MCF 10A (cell line): ENCODE measurements at regions of chr11 and their contacts with region 1.

Region 1: GRCh38 chr11:86456052-86456939 is 81.6 kb downstream of the CCDC81 start:
- DNase-seq: peak; percentile 86
- H3K4me3 Mint-ChIP-seq: no peak overlapping the region
- H3K27ac Mint-ChIP-seq: no peak overlapping the region
- H3K4me1 Mint-ChIP-seq: peaks cover 26% of the 10 kb centered on the region
- H3K27me3 Mint-ChIP-seq: no peaks in the 10 kb centered on the region
- CTCF ChIP-seq: peak; percentile 78

Region 2: GRCh38 chr11:85854557-85855340 is 601.5 kb before region 1 on chr11:
- CTCF ChIA-PET with region 1: interaction called, 3 read pairs
- POLR2A ChIA-PET with region 1: no interaction called
- intact Hi-C with region 1: loop called (anchors 5 kb)
- DNase-seq: peak; percentile 85
- H3K4me3 Mint-ChIP-seq: peak overlapping the region; percentile 76
- H3K27ac Mint-ChIP-seq: peak overlapping the region; percentile 87
- H3K4me1 Mint-ChIP-seq: no peaks in the 10 kb centered on the region
- H3K27me3 Mint-ChIP-seq: no peaks in the 10 kb centered on the region
- CTCF ChIP-seq: peak; percentile 86

Region 3: GRCh38 chr11:86386746-86387145 is 69.5 kb before region 1 on chr11:
- CTCF ChIA-PET with region 1: no interaction called
- POLR2A ChIA-PET with region 1: no interaction called
- intact Hi-C with region 1: no loop called
- DNase-seq: no peak
- H3K4me3 Mint-ChIP-seq: no peak overlapping the region
- H3K27ac Mint-ChIP-seq: no peak overlapping the region
- H3K4me1 Mint-ChIP-seq: no peaks in the 10 kb centered on the region
- H3K27me3 Mint-ChIP-seq: no peaks in the 10 kb centered on the region
- CTCF ChIP-seq: no peak

Region 4: DNA sequence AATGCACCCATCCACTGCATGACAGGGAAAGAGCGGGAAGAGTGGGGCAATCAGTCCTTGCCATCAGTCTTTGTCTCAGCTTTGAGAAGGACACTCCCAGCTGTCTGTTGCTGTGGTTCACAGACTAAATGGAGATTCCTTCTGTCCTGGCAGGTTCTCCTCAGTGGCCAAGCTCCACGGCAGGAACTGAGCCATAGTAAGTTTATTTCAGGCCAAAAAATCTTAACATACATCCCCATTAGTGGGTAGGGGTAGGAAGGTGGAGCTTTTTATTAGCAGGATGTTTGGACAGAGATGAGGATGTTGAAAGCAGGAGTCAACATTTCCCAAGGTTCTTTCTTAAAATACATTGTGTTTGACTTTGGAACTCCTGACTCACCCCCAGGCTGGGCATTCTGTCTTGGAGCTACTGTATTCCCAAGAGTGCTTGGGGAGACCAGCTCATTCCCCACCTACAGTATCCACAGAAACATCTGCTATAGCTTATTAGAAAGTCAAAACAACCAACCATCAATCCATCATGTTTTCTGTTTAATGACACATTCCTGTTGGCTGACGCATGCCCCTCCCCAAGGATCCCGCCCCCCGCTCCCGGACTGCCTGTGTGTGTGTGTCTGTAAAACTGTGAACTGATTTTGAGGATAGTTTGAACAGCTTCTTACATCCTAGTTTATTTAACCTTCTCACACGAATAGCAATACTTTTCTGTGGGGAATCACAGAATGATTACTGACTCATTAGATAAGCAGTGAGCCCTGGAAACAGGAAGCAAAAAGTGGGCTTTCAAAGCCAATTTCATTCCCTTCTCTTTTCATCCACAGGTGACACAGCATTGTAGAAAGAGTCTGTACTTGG is 27.9 kb after region 1 on chr11:
- CTCF ChIA-PET with region 1: interaction called, 17 read pairs
- POLR2A ChIA-PET with region 1: interaction called, 3 read pairs
- intact Hi-C with region 1: no loop called
- DNase-seq: peak; percentile 88
- H3K4me3 Mint-ChIP-seq: no peak overlapping the region
- H3K27ac Mint-ChIP-seq: peak overlapping the region; percentile 39
- H3K4me1 Mint-ChIP-seq: peaks cover 36% of the 10 kb centered on the region
- H3K27me3 Mint-ChIP-seq: no peaks in the 10 kb centered on the region
- CTCF ChIP-seq: no peak

Region 5: DNA sequence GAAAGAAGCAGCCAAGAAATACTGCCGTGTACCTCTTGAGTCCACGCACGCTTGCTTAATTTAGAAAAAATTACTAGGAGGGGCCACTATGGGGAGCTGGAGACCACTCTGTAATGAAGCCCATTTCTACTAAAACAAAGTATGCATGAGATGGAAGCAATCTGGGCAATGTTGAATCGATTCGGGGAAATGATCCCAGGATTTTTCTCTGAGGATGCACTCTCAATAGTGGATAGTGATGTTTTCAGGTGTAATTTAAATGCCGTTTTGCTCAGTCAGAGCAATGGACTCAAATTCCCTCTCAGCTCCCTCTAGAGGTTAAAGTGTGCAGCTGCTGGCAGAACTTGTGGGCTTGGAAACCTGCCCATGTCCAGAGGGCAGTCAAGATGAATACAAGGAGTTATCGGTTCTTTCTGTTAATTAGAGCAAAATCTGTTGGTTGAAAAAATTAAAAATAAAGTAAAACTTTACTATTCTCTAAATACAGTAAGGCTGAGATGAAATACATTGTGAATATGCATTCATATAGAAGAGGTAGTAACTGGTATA is 152.0 kb after region 1 on chr11:
- CTCF ChIA-PET with region 1: interaction called, 46 read pairs
- POLR2A ChIA-PET with region 1: interaction called, 5 read pairs
- intact Hi-C with region 1: loop called (anchors 1 kb)
- DNase-seq: peak; percentile 82
- H3K4me3 Mint-ChIP-seq: no peak overlapping the region
- H3K27ac Mint-ChIP-seq: no peak overlapping the region
- H3K4me1 Mint-ChIP-seq: peaks cover 20% of the 10 kb centered on the region
- H3K27me3 Mint-ChIP-seq: no peaks in the 10 kb centered on the region
- CTCF ChIP-seq: peak; percentile 89

Region 6: GRCh38 chr11:86688398-86689179 is 232.3 kb after region 1 on chr11:
- CTCF ChIA-PET with region 1: no interaction called
- POLR2A ChIA-PET with region 1: no interaction called
- intact Hi-C with region 1: no loop called
- DNase-seq: no peak
- H3K4me3 Mint-ChIP-seq: no peak overlapping the region
- H3K27ac Mint-ChIP-seq: no peak overlapping the region
- H3K4me1 Mint-ChIP-seq: peaks cover 14% of the 10 kb centered on the region
- H3K27me3 Mint-ChIP-seq: no peaks in the 10 kb centered on the region
- CTCF ChIP-seq: no peak

Region 7: GRCh38 chr11:86811637-86812321 is 355.5 kb after region 1 on chr11:
- CTCF ChIA-PET with region 1: interaction called, 32 read pairs
- POLR2A ChIA-PET with region 1: no interaction called
- intact Hi-C with region 1: no loop called
- DNase-seq: peak; percentile 54
- H3K4me3 Mint-ChIP-seq: no peak overlapping the region
- H3K27ac Mint-ChIP-seq: no peak overlapping the region
- H3K4me1 Mint-ChIP-seq: peaks cover 13% of the 10 kb centered on the region
- H3K27me3 Mint-ChIP-seq: no peaks in the 10 kb centered on the region
- CTCF ChIP-seq: no peak

Region 8: GRCh38 chr11:86919557-86920210 is 463.4 kb after region 1 on chr11:
- CTCF ChIA-PET with region 1: interaction called, 24 read pairs
- POLR2A ChIA-PET with region 1: no interaction called
- intact Hi-C with region 1: loop called (anchors 1 kb)
- DNase-seq: peak; percentile 68
- H3K4me3 Mint-ChIP-seq: no peak overlapping the region
- H3K27ac Mint-ChIP-seq: no peak overlapping the region
- H3K4me1 Mint-ChIP-seq: peaks cover 19% of the 10 kb centered on the region
- H3K27me3 Mint-ChIP-seq: no peaks in the 10 kb centered on the region
- CTCF ChIP-seq: peak; percentile 69